Motor neuron (in vitro differentiated cells): ENCODE measurements at regions of chr12 and their contacts with region 1.

Region 1: DNA sequence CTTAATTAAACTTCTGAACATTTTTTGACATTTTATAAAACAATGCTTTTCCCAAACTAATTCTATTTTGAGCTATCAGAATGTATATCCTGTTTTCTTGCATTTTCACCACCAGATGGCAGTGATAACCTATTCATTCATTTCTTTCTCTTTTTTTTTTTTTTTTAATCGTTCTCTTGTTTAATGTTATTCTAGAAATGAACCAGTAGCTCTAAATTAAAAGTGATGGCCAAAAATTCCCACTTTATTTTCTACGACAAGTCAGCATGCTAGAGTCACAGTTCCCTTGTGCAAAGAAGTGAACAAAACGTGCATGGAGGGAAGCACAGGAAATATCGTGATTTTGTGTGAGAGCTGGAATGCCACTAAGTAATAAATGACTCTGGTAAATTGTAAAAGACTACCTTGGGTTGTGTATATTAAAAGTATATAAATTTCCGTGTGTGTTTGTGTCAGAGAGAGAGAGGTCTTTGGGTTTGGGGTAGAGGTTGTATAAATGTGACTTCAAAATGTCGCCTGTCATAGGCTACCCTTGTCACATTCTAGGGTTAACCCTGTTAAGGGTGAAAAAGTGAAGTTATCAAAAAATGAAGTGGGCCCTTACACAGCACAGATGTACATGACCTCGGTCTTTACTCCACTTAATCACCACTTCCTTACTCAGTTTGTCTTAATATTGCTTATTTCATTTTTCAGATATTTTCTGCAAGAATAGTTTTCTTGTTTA is 40.4 kb upstream of the LDHB start:
- ATAC-seq: no peak
- H3K4me3 ChIP-seq: no peak overlapping the region
- H3K27ac ChIP-seq: no peak overlapping the region
- H3K4me1 ChIP-seq: no peaks in the 10 kb centered on the region

Region 2: GRCh38 chr12:21989819-21990412 is 291.8 kb after region 1 on chr12:
- in situ Hi-C with region 1: loop called in 4 of 9 experiments (anchors 10 to 25 kb)
- ATAC-seq: peak in 1 of 8 experiments; percentile 32
- H3K4me3 ChIP-seq: no peak overlapping the region
- H3K27ac ChIP-seq: no peak overlapping the region
- H3K4me1 ChIP-seq: no peaks in the 10 kb centered on the region

Region 3: DNA sequence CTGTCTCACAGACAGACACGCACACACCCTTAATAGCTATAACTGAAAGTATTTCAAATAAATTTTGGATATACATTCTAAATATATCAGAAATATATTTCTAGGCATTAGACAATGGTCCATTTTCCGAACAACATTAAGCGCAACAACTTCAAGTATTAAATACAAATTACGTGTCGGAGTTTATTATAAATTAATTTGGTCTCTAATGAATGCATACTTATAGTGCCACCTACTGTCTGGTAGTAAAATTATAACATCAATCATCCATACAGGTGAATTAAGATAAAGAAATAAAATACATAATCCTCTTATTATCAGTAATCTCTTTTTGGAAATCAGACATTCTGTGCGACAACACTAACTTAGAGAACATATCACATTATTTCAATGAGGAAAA is 320.8 kb after region 1 on chr12:
- in situ Hi-C with region 1: loop called in 2 of 9 experiments (anchors 25 kb)
- ATAC-seq: no peak
- H3K4me3 ChIP-seq: no peak overlapping the region
- H3K27ac ChIP-seq: no peak overlapping the region
- H3K4me1 ChIP-seq: no peaks in the 10 kb centered on the region